Left ventricle myocardium superior (tissue), 1 donor: ENCODE measurements at regions of chr12 and their contacts with region 1.

Region 1: GRCh38 chr12:100576331-100577036 is 3.0 kb downstream of the GAS2L3 start:
- DNase-seq: no peak
- ATAC-seq: no peak

Region 2: GRCh38 chr12:100610666-100611430 is 34.4 kb after region 1 on chr12:
- intact Hi-C with region 1: loop called (anchors 2 kb)
- DNase-seq: no peak
- ATAC-seq: no peak

Region 3: GRCh38 chr12:101823891-101824290 is 1247.4 kb after region 1 on chr12:
- intact Hi-C with region 1: no loop called
- DNase-seq: peak; percentile 63
- ATAC-seq: peak; percentile 96